PC-3 (cell line): ENCODE measurements at regions of chr22 and their contacts with region 1.

Region 1: DNA sequence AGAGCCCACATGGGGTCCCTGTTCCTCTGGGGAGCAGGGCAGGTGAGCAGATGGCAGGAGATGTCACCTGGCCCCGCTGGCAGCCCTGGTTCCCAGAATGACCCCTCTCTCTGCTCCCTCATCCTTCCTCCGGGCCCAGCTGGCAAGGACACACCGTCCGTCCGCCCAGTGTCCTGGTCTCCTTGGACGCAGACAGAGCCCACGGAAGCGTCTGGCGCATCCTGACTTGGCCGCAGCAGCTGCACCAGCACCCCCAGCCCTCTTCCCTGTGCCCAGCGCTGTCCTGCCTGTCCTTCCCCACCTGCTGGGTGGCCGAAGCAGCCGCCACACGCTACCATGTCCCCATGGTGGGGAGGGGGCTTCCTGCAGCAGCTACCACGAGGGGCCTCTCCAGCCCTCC is 9.6 kb upstream of the CABP7 start:
- DNase-seq: no peak
- ATAC-seq: no peak
- H3K4me3 ChIP-seq: no peak overlapping the region
- H3K27ac ChIP-seq: no peak overlapping the region
- H3K4me1 ChIP-seq: no peaks in the 10 kb centered on the region; the same call in 1 of the 2 replicates
- H3K27me3 ChIP-seq: no peaks in the 10 kb centered on the region
- CTCF ChIP-seq: no peak

Region 2: GRCh38 chr22:29689206-29689879 is 20.9 kb before region 1 on chr22:
- CTCF ChIA-PET with region 1: no interaction called
- POLR2A ChIA-PET with region 1: interaction called, 14 read pairs
- intact Hi-C with region 1: no loop called
- DNase-seq: no peak
- ATAC-seq: no peak
- H3K4me3 ChIP-seq: no peak overlapping the region
- H3K27ac ChIP-seq: no peak overlapping the region
- H3K4me1 ChIP-seq: no peaks in the 10 kb centered on the region
- H3K27me3 ChIP-seq: no peaks in the 10 kb centered on the region
- CTCF ChIP-seq: no peak

Region 3: DNA sequence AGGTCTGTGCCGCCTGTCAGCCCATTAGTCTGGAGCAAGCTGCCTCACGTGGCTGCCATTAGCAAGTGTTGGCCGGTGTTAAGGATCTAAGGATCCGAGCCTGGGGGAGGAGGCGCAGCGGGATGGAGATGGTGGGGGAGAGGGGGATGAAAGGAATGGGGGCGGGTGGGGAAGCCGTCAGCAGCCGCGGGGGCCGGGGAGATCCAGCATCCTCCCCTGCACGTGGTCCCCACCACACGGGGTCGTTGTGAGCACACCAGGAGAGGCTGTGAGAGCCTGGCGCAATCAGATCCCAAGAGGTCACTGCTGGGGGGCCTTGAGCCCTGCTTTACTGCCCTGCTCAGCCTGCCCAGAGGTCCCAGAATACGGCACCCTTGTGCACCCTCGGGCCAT is 16.9 kb after region 1 on chr22:
- CTCF ChIA-PET with region 1: no interaction called
- POLR2A ChIA-PET with region 1: no interaction called
- intact Hi-C with region 1: no loop called
- DNase-seq: no peak
- ATAC-seq: peak; percentile 46; the same call in 1 of the 2 replicates
- H3K4me3 ChIP-seq: no peak overlapping the region
- H3K27ac ChIP-seq: no peak overlapping the region
- H3K4me1 ChIP-seq: no peaks in the 10 kb centered on the region
- H3K27me3 ChIP-seq: no peaks in the 10 kb centered on the region
- CTCF ChIP-seq: 0 out of 2 replicates have a peak, but pooled peaks have one; percentile 27